IMR-90 (cell line): ENCODE measurements at regions of chr20 and their contacts with region 1.

Region 1: GRCh38 chr20:1509237-1509636 is 18.0 kb upstream of the SIRPB2 start:
- DNase-seq: peak; percentile 37
- ATAC-seq: peak; percentile 69
- H3K4me3 ChIP-seq: no peak overlapping the region
- H3K27ac ChIP-seq: no peak overlapping the region
- H3K4me1 ChIP-seq: no peaks in the 10 kb centered on the region
- H3K27me3 ChIP-seq: peaks cover 11% of the 10 kb centered on the region
- CTCF ChIP-seq: peak; percentile 36
- POLR2A ChIP-seq: no peak
- RAD21 ChIP-seq: 0 out of 2 replicates have a peak, but pooled peaks have one; percentile 27

Region 2: DNA sequence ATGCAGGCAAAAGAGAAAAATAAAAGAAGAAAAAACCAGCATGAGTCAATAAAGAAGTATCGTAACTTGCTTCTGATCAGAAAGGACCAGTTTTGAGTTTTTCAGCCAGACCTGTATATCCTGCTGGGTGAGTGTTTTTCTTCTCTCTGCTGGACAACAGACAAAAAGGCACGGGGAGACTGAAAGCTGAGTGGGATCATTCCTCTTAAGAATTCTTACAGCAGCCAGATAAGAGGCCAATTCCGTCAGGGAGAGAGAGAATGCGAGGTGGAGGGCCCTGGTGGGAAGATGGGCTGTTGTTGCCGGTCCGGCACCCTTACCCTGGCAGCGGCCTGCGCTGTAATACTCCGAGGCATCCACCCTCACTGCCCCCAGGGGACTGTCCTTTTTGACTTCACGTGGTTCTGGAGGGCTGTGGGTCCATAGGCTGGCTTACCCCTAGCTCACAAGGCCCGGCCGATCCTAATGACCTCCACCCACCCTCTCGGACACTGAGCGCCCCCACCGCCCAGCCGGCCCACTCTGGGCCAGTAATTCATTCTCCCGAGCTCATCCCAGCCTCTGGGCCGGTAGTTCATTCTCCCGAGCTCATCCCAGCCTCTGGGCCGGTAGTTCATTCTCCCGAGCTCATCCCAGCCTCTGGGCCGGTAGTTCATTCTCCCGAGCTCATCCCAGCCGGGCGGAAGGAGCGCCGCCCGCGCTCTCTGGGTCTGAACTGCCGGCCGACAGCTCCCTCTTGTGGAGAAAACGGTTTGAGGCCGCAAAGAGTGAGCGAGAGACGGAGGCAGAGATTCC is 267.6 kb after region 1 on chr20:
- CTCF ChIA-PET with region 1: no interaction called
- POLR2A ChIA-PET with region 1: no interaction called
- dilution Hi-C with region 1: no loop called
- in situ Hi-C with region 1: no loop called
- intact Hi-C with region 1: loop called (anchors 2 kb)
- DNase-seq: peak; percentile 87
- ATAC-seq: peak; percentile 97
- H3K4me3 ChIP-seq: peak overlapping the region; percentile 84
- H3K27ac ChIP-seq: peak overlapping the region; percentile 73
- H3K4me1 ChIP-seq: peaks cover 4% of the 10 kb centered on the region
- H3K27me3 ChIP-seq: peaks cover 14% of the 10 kb centered on the region
- CTCF ChIP-seq: peak; percentile 84
- POLR2A ChIP-seq: peak; percentile 65; the same call in 1 of the 2 replicates
- RAD21 ChIP-seq: peak; percentile 70

Region 3: DNA sequence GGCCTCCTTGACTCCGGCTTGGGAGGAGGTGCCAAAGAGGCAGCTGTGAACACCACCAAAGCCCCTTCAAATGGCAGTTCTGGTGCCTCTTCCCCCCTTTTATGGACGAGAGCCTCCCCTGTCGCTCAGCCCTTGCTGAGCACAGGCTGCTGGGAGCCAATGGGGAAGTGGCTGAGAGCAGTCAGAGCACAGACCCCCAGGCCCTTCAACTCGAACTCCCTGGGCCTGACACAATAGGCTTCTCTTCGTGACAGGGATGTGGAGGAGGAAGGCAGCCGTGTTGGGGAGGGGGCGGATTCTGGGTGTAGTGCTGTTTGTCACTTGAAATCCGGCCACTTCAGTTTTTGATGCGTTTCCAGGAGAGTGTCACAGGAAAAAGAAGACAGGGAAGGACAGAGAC is 484.7 kb after region 1 on chr20 and contains the start of gene PDYN:
- CTCF ChIA-PET with region 1: no interaction called
- POLR2A ChIA-PET with region 1: no interaction called
- dilution Hi-C with region 1: no loop called
- in situ Hi-C with region 1: no loop called
- intact Hi-C with region 1: no loop called
- DNase-seq: no peak
- ATAC-seq: no peak
- H3K4me3 ChIP-seq: no peak within 1 kb of the TSS
- H3K27ac ChIP-seq: no peak within 1 kb of the TSS
- H3K4me1 ChIP-seq: no peaks in the 10 kb centered on the region
- H3K27me3 ChIP-seq: peaks cover 44% of the 10 kb centered on the region
- CTCF ChIP-seq: no peak
- POLR2A ChIP-seq: no peak
- RAD21 ChIP-seq: no peak
- total RNA-seq, gene PDYN: not detected in 2 replicates